Breast epithelium (tissue), 4 donors: ENCODE measurements at regions of chr18 and their contacts with region 1.

Region 1: DNA sequence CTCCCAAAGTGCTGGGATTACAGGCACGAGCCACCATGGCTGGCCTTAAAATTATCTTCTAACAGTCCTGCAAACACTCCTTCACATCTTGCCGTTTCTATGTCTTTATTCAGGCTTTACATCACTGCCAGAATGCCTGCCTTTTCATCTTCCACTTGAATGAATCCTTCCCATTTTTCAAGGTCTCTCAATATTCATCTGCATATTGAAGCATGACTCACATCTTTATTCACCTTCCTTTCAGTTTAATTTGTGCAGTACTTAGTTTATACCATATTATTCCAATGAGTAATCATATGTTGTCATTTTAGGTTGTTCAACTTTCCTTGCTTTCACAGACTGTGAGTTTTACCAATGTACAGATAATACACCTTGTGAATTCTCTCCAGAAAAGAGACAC is 510.1 kb upstream of the PIK3C3 start:
- DNase-seq: no peak
- H3K4me3 ChIP-seq: no peak overlapping the region
- H3K27ac ChIP-seq: no peak overlapping the region
- H3K4me1 ChIP-seq: no peaks in the 10 kb centered on the region
- H3K27me3 ChIP-seq: no peaks in the 10 kb centered on the region
- CTCF ChIP-seq: no peak
- POLR2A ChIP-seq: no peak

Region 2: DNA sequence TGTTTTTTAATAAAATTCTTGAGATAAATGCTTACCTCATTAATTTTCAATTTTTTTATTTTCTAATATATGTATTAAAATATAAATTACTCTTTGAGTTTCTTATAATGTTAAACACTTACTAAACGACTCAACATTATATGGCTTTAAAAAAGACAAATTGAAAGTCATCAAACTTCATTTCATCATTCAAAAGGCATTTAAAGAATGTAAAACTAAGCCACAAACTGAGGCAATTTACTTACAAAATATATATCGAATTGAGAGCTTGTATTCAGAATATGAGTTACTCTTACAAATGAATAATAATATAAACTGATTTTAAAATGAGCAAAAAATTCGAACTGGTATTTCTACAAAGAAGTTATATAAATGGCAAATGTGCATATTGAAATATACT is 752.1 kb before region 1 on chr18:
- intact Hi-C with region 1: loop called (anchors 10 kb)
- DNase-seq: no peak
- H3K4me3 ChIP-seq: no peak overlapping the region
- H3K27ac ChIP-seq: no peak overlapping the region
- H3K4me1 ChIP-seq: no peaks in the 10 kb centered on the region
- H3K27me3 ChIP-seq: no peaks in the 10 kb centered on the region
- CTCF ChIP-seq: no peak
- POLR2A ChIP-seq: no peak